A673 (cell line): ENCODE measurements at regions of chr6 and their contacts with region 1.

Region 1: GRCh38 chr6:95364016-95364604 is 213.2 kb upstream of the MANEA start:
- DNase-seq: peak; percentile 51
- H3K4me3 ChIP-seq: no peak overlapping the region
- H3K27ac ChIP-seq: no peak overlapping the region
- H3K4me1 ChIP-seq: no peaks in the 10 kb centered on the region
- H3K27me3 ChIP-seq: no peaks in the 10 kb centered on the region
- CTCF ChIP-seq: peak; percentile 63

Region 2: GRCh38 chr6:95383878-95384277 is 19.8 kb after region 1 on chr6:
- CTCF ChIA-PET with region 1: no interaction called
- POLR2A ChIA-PET with region 1: no interaction called
- intact Hi-C with region 1: no loop called
- DNase-seq: no peak
- H3K4me3 ChIP-seq: no peak overlapping the region
- H3K27ac ChIP-seq: no peak overlapping the region
- H3K4me1 ChIP-seq: no peaks in the 10 kb centered on the region
- H3K27me3 ChIP-seq: no peaks in the 10 kb centered on the region
- CTCF ChIP-seq: no peak

Region 3: GRCh38 chr6:95866732-95867131 is 502.6 kb after region 1 on chr6:
- CTCF ChIA-PET with region 1: no interaction called
- POLR2A ChIA-PET with region 1: no interaction called
- intact Hi-C with region 1: loop called (anchors 5 kb)
- DNase-seq: peak; percentile 30
- H3K4me3 ChIP-seq: no peak overlapping the region
- H3K27ac ChIP-seq: no peak overlapping the region
- H3K4me1 ChIP-seq: no peaks in the 10 kb centered on the region
- H3K27me3 ChIP-seq: no peaks in the 10 kb centered on the region
- CTCF ChIP-seq: peak; percentile 63

Region 4: GRCh38 chr6:95923518-95923917 is 559.4 kb after region 1 on chr6:
- CTCF ChIA-PET with region 1: no interaction called
- POLR2A ChIA-PET with region 1: no interaction called
- intact Hi-C with region 1: loop called (anchors 10 kb)
- DNase-seq: peak; percentile 52
- H3K4me3 ChIP-seq: no peak overlapping the region
- H3K27ac ChIP-seq: no peak overlapping the region
- H3K4me1 ChIP-seq: no peaks in the 10 kb centered on the region
- H3K27me3 ChIP-seq: no peaks in the 10 kb centered on the region
- CTCF ChIP-seq: peak; percentile 62

Region 5: GRCh38 chr6:96468681-96469224 is 1104.6 kb after region 1 on chr6:
- CTCF ChIA-PET with region 1: no interaction called
- POLR2A ChIA-PET with region 1: no interaction called
- intact Hi-C with region 1: loop called (anchors 5 kb)
- DNase-seq: peak; percentile 53
- H3K4me3 ChIP-seq: no peak overlapping the region
- H3K27ac ChIP-seq: no peak overlapping the region
- H3K4me1 ChIP-seq: no peaks in the 10 kb centered on the region
- H3K27me3 ChIP-seq: no peaks in the 10 kb centered on the region
- CTCF ChIP-seq: peak; percentile 62; the same call in 1 of the 2 replicates

Region 6: GRCh38 chr6:97059473-97059872 is 1695.4 kb after region 1 on chr6:
- CTCF ChIA-PET with region 1: no interaction called
- POLR2A ChIA-PET with region 1: no interaction called
- intact Hi-C with region 1: loop called (anchors 10 kb)
- DNase-seq: peak; percentile 69
- H3K4me3 ChIP-seq: no peak overlapping the region
- H3K27ac ChIP-seq: no peak overlapping the region
- H3K4me1 ChIP-seq: no peaks in the 10 kb centered on the region
- H3K27me3 ChIP-seq: no peaks in the 10 kb centered on the region
- CTCF ChIP-seq: peak; percentile 72